Activated CD4-positive, alpha-beta T cell treated with anti-CD3 and anti-CD28 coated beads, Interleukin-2, amount 10 ng/mL, durations not matched to agents 7 days and 5 days (primary cell): ENCODE measurements at regions of chr4 and their contacts with region 1.

Region 1: GRCh38 chr4:54863571-54864255 is 206.0 kb downstream of the KIT start:
- DNase-seq: no peak
- H3K4me3 Mint-ChIP-seq: no peak overlapping the region
- H3K27ac Mint-ChIP-seq: no peak overlapping the region
- H3K4me1 Mint-ChIP-seq: no peaks in the 10 kb centered on the region
- H3K27me3 Mint-ChIP-seq: no peaks in the 10 kb centered on the region

Region 2: GRCh38 chr4:54819034-54819433 is 44.7 kb before region 1 on chr4:
- CTCF ChIA-PET with region 1: no interaction called
- POLR2A ChIA-PET with region 1: no interaction called
- DNase-seq: no peak
- H3K4me3 Mint-ChIP-seq: no peak overlapping the region
- H3K27ac Mint-ChIP-seq: no peak overlapping the region
- H3K4me1 Mint-ChIP-seq: no peaks in the 10 kb centered on the region
- H3K27me3 Mint-ChIP-seq: no peaks in the 10 kb centered on the region

Region 3: DNA sequence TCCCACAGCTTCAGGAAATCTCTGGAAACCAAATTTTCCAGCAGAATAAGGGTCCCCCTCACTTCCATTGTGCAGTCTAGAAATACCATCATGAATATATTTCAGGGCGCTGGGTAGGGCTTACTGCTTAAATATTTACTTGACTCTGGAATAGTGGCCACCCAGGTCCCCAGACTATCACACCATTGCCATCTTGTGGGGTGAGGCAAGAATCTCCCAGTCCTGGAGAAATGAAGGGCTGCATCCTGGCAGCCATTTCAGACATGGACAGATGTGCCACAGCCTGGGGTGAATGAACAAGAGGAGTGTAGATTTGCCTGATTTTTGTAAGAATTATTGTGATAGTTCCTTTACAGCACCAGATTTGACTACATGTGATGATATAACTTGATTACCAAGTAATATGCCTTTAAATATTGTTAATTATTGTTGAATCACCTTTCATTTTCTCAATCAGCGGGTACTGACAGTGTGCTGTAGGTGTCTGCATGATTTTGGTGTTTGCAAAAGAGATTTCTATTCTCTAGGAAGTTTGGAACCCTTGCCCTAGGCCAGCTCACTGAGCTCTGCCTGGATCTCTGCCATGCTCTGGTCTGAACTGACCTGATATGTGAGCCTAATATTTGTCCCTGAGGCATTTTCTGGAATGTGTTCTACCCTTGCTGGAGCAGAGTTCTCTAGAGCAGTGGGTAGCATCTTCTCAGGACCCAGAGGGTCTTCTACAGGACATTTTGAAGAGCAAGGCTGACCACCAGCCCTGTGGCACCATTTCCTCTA is 22.5 kb before region 1 on chr4:
- CTCF ChIA-PET with region 1: no interaction called
- POLR2A ChIA-PET with region 1: no interaction called
- DNase-seq: no peak
- H3K4me3 Mint-ChIP-seq: no peak overlapping the region
- H3K27ac Mint-ChIP-seq: no peak overlapping the region
- H3K4me1 Mint-ChIP-seq: no peaks in the 10 kb centered on the region
- H3K27me3 Mint-ChIP-seq: no peaks in the 10 kb centered on the region

Region 4: GRCh38 chr4:54902271-54902670 is 38.6 kb after region 1 on chr4:
- CTCF ChIA-PET with region 1: no interaction called
- POLR2A ChIA-PET with region 1: interaction called, 11 read pairs
- DNase-seq: no peak
- H3K4me3 Mint-ChIP-seq: no peak overlapping the region
- H3K27ac Mint-ChIP-seq: no peak overlapping the region
- H3K4me1 Mint-ChIP-seq: no peaks in the 10 kb centered on the region
- H3K27me3 Mint-ChIP-seq: peaks cover 1% of the 10 kb centered on the region